HEK293 (cell line): ENCODE measurements at regions of chr1 and their contacts with region 1.

Region 1: GRCh38 chr1:151934048-151934493 is 24.8 kb upstream of the THEM4 start:
- H3K4me3 ChIP-seq: no peak overlapping the region
- H3K27ac ChIP-seq: no peak overlapping the region
- H3K4me1 ChIP-seq: peaks cover 8% of the 10 kb centered on the region; the same call in 1 of the 2 replicates
- CTCF ChIP-seq: peak; percentile 85

Region 2: DNA sequence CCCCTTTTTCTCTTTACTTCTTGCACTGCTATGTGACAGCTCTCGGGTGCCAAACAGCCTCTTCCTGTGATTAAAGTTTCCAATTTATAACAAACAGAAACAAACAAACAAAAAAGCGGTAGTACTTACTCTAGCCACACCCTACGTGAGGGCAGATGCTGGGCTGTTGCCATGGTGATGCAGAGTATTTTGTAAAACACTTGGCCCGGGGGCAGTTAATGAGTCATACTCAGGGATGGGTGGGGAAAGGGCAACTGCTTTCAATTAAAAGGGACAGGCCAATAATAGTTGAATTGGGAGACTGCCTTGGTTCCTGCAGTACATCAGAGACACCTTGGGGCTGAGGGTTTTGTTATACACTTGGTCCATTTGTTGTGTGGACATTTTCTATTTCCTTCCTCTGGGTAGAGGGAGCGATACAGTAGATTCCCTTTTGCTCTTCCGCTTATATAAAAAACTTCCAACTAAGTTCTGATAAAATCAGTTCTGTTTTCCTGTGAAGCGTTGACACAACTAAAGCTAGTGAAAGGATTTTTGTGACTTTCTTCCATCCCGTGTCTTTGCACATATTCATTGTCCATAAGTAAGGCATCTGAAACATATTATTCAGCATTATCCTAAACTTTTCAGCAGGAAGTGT is 11.8 kb after region 1 on chr1:
- CTCF ChIA-PET with region 1: interaction called, 10 read pairs
- POLR2A ChIA-PET with region 1: interaction called, 4 read pairs
- H3K4me3 ChIP-seq: no peak overlapping the region
- H3K27ac ChIP-seq: no peak overlapping the region
- H3K4me1 ChIP-seq: peaks cover 15% of the 10 kb centered on the region
- CTCF ChIP-seq: no peak

Region 3: GRCh38 chr1:151976858-151977257 is 42.8 kb after region 1 on chr1:
- CTCF ChIA-PET with region 1: interaction called, 15 read pairs
- POLR2A ChIA-PET with region 1: no interaction called
- H3K4me3 ChIP-seq: no peak overlapping the region
- H3K27ac ChIP-seq: no peak overlapping the region
- H3K4me1 ChIP-seq: peaks cover 25% of the 10 kb centered on the region
- CTCF ChIP-seq: no peak

Region 4: DNA sequence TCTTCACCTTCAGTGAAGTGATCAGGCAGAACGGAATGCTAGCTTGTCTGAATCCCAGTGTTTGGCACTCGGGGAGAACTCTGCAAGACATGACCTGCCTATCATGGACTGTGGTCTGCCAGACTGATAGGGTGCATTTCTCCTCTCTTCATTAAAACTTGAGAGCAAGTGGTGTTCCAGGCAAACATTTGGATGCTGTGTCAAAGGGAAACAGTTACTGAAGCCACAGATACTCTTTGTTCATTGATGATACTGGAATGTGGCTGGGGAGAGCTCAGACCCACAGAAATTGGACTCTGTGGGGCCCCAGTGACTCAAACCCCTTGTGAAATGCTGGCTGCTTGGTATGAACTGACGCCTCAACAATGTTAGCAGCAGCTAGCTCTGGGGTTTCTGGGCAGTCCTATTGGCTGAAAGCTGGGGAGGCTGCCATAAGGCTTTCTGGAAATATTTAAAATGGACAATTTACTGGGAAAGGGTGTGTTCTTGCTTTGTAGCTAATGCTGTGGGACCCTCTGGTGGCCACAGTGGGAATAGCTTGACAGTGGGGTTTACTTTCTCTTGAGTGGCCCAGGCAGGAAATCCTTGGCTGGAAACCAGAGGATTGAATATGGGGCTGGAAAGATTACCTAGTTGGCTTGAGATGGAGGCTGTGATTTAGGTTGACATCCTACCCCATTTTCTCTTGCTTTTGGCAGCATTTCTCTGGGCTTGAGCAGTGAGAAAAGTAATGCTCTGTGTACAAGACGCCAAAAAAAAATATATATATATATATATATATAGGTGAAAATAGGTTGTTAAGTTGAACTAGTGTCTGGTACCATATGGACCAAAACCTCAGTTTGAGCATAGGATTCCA is 67.5 kb after region 1 on chr1:
- CTCF ChIA-PET with region 1: interaction called, 301 read pairs
- POLR2A ChIA-PET with region 1: interaction called, 7 read pairs
- H3K4me3 ChIP-seq: no peak overlapping the region
- H3K27ac ChIP-seq: no peak overlapping the region
- H3K4me1 ChIP-seq: no peaks in the 10 kb centered on the region
- CTCF ChIP-seq: peak; percentile 73; the same call in 1 of the 2 replicates

Region 5: GRCh38 chr1:152034646-152035405 is 100.8 kb after region 1 on chr1:
- CTCF ChIA-PET with region 1: interaction called, 23 read pairs
- POLR2A ChIA-PET with region 1: no interaction called
- H3K4me3 ChIP-seq: peak overlapping the region; percentile 70
- H3K27ac ChIP-seq: peak overlapping the region; percentile 78
- H3K4me1 ChIP-seq: no peaks in the 10 kb centered on the region; the same call in 1 of the 2 replicates
- CTCF ChIP-seq: peak; percentile 43